ENCODE measurements at regions of chr17 and their contacts with region 1.

Region 1: GRCh38 chr17:73291964-73292531 is 19.8 kb downstream of the CDC42EP4 start:
- DNase-seq: peak; percentile 75 to 93
- H3K4me3 ChIP-seq: peak overlapping the region in 1 of 2 donors; percentile 24
- H3K27ac ChIP-seq: peak overlapping the region; percentile 87 to 94
- H3K4me1 ChIP-seq: peaks cover 3 to 87% (median 78%) of the 10 kb centered on the region in 4 donors
- H3K27me3 ChIP-seq: no peaks in the 10 kb centered on the region
- CTCF ChIP-seq: no peak

Region 2: DNA sequence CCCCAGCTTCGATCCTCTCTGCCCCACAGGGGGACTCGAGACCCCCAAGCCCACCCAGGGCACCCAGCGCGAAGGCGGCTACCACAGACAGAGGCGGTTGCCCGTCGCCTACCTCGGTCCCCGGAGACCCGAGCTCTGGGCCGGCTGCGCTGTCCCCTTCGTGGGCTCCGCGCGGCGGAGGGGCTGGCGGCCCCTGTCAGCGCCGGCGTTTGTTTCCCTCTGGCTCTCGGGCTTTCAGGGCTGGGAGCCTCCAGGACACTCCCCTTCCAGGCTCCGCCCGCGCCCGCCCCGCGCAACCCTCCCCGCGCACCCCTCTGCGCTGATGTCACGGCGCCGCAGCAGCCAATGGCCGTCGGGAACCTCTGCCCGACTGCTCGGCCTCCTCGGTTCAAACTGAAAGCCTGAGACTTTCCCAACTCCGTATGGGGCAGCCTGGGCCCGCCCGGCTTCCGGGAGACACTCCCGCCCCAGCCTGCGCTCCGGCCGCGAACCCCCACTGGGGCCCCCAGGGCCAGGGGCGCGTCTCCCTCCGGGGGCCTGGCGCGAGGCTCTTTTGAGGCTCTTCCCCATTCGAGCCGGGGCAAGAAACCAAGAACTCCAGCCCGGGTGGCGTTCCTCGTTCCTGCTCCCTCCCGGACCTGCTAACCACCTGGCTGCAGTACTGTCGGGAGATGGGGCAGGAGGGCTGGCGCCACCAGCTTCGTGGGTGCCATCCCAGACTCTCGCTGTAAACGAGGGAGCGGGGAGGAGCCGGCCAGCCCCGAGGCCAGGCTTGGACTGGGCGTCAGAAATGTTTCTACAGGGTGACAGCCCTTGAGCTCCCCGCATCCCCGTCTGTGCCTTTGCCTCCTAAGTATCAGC is 20.0 kb after region 1 on chr17 and contains the start of gene CDC42EP4:
- intact Hi-C with region 1: loop called (anchors 2 kb)
- DNase-seq: peak; percentile 95 to 98
- H3K4me3 ChIP-seq: peak within 1 kb of the TSS; percentile 76 to 94
- H3K27ac ChIP-seq: peak within 1 kb of the TSS; percentile 97 to 98
- H3K4me1 ChIP-seq: peaks cover 0 to 43% (median 36%) of the 10 kb centered on the region in 4 donors
- H3K27me3 ChIP-seq: no peaks in the 10 kb centered on the region
- CTCF ChIP-seq: no peak